ENCODE measurements at regions of chr14 and their contacts with region 1.

Region 1: DNA sequence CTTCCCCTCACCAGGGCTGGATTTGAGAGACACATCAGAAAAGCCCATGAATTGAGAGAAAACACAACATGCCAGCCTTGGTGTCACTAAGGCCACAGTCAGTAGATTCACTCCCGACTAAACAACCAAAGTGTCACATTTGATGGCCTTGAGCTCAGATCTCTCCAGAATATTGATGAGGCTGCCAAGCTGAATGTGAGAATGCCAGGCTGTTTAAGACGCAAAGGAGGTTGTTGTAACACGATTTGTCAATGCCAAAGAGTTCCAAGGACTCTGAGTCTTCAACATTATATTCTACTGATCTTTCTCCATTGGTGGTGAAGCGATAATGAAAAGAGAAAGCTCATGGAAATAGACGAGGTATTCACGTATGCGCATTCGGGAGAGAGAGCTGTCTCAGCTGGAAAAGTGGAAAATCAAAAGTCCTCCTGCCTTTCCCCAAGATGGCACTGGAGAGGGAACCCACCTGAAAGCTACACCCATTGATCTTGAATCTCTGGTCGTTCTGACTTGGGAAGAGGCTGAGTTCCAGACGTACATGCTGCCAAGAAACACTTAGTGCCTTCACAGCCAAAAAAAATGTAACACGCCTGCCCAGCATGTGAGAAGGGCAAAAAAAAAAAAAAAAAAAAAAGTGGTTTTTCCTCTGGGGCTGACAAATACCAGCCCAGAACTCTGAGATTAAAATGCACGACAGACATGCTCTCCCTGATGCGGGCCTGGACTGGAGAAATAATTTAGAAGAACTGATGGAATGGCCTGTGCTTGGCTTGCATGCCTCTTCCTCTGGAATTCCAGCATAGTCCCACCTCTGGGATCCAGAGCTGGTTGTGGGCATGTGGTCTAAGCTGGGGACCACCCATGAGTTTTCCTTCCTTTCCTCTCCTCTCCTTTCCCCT is 1159.6 kb downstream of the VRK1 start:
- DNase-seq: no peak
- ATAC-seq: no peak
- H3K4me3 ChIP-seq: no peak overlapping the region
- H3K27ac ChIP-seq: no peak overlapping the region
- H3K4me1 ChIP-seq: no peaks in the 10 kb centered on the region
- H3K27me3 ChIP-seq: no peaks in the 10 kb centered on the region
- CTCF ChIP-seq: no peak
- POLR2A ChIP-seq: no peak
- RAD21 ChIP-seq: no peak

Region 2: GRCh38 chr14:97946287-97946639 is 10.6 kb before region 1 on chr14:
- CTCF ChIA-PET with region 1: no interaction called
- POLR2A ChIA-PET with region 1: no interaction called
- dilution Hi-C with region 1: no loop called
- in situ Hi-C with region 1: no loop called
- intact Hi-C with region 1: loop called (anchors 1 kb)
- DNase-seq: no peak
- ATAC-seq: no peak
- H3K4me3 ChIP-seq: no peak overlapping the region
- H3K27ac ChIP-seq: no peak overlapping the region
- H3K4me1 ChIP-seq: no peaks in the 10 kb centered on the region
- H3K27me3 ChIP-seq: no peaks in the 10 kb centered on the region
- CTCF ChIP-seq: no peak
- POLR2A ChIP-seq: no peak
- RAD21 ChIP-seq: no peak